Naive thymus-derived CD4-positive, alpha-beta T cell (primary cell): ENCODE measurements at regions of chr5 and their contacts with region 1.

Region 1: GRCh38 chr5:134077926-134078580 is 36.4 kb upstream of the TCF7 start:
- DNase-seq: peak in 2 of 9 donors; percentile 43 to 45
- ATAC-seq: peak; percentile 49
- H3K4me3 ChIP-seq: no peak overlapping the region
- H3K4me3 Mint-ChIP-seq: peak overlapping the region; percentile 59 to 83 (median 78)
- H3K27ac ChIP-seq: peak overlapping the region; percentile 46
- H3K27ac Mint-ChIP-seq: peak overlapping the region; percentile 90 to 99 (median 97)
- H3K4me1 ChIP-seq: peaks cover 20 to 73% of the 10 kb centered on the region in 2 donors
- H3K4me1 Mint-ChIP-seq: peaks cover 43 to 91% (median 83%) of the 10 kb centered on the region in 7 donors
- H3K27me3 ChIP-seq: no peaks in the 10 kb centered on the region
- H3K27me3 Mint-ChIP-seq: no peaks in the 10 kb centered on the region

Region 2: GRCh38 chr5:134092878-134093277 is 14.8 kb after region 1 on chr5:
- CTCF ChIA-PET with region 1: interaction called, 40 read pairs
- POLR2A ChIA-PET with region 1: interaction called, 44 read pairs
- intact Hi-C with region 1: loop called in 1 of 2 experiments (anchors 1 kb)
- DNase-seq: no peak
- ATAC-seq: no peak
- H3K4me3 ChIP-seq: no peak overlapping the region
- H3K4me3 Mint-ChIP-seq: peak overlapping the region in 9 of 10 donors; percentile 36 to 87 (median 72)
- H3K27ac ChIP-seq: peak overlapping the region; percentile 69
- H3K27ac Mint-ChIP-seq: peak overlapping the region in 8 of 9 donors; percentile 91 to 99 (median 96)
- H3K4me1 ChIP-seq: peaks cover 59 to 93% of the 10 kb centered on the region in 2 donors
- H3K4me1 Mint-ChIP-seq: peaks cover 54 to 97% (median 85%) of the 10 kb centered on the region in 7 donors
- H3K27me3 ChIP-seq: no peaks in the 10 kb centered on the region
- H3K27me3 Mint-ChIP-seq: peaks cover 0 to 36% (median 0%) of the 10 kb centered on the region in 5 donors

Region 3: GRCh38 chr5:134188092-134188491 is 110.0 kb after region 1 on chr5:
- CTCF ChIA-PET with region 1: no interaction called
- POLR2A ChIA-PET with region 1: no interaction called
- intact Hi-C with region 1: no loop called
- DNase-seq: no peak
- ATAC-seq: no peak
- H3K4me3 ChIP-seq: no peak overlapping the region
- H3K4me3 Mint-ChIP-seq: no peak overlapping the region
- H3K27ac ChIP-seq: no peak overlapping the region
- H3K27ac Mint-ChIP-seq: peak overlapping the region in 1 of 9 donors; percentile 48
- H3K4me1 ChIP-seq: no peaks in the 10 kb centered on the region
- H3K4me1 Mint-ChIP-seq: peaks cover 0 to 7% (median 0%) of the 10 kb centered on the region in 7 donors
- H3K27me3 ChIP-seq: no peaks in the 10 kb centered on the region
- H3K27me3 Mint-ChIP-seq: no peaks in the 10 kb centered on the region